Activated naive CD4-positive, alpha-beta T cell treated with anti-CD3 and anti-CD28 coated beads, Interleukin-2, amount 10 ng/mL, durations not matched to agents 7 days and 5 days (primary cell): ENCODE measurements at regions of chr12 and their contacts with region 1.

Region 1: GRCh38 chr12:123384318-123384993 is 524 bp downstream of the KMT5A start:
- DNase-seq: peak; percentile 54
- H3K4me3 Mint-ChIP-seq: peak overlapping the region; percentile 97
- H3K27ac Mint-ChIP-seq: peak overlapping the region; percentile 86
- H3K4me1 Mint-ChIP-seq: peaks cover 42% of the 10 kb centered on the region
- H3K27me3 Mint-ChIP-seq: no peaks in the 10 kb centered on the region

Region 2: GRCh38 chr12:123319826-123320225 is 64.6 kb before region 1 on chr12:
- CTCF ChIA-PET with region 1: no interaction called
- DNase-seq: no peak
- H3K4me3 Mint-ChIP-seq: no peak overlapping the region
- H3K27ac Mint-ChIP-seq: no peak overlapping the region
- H3K4me1 Mint-ChIP-seq: no peaks in the 10 kb centered on the region
- H3K27me3 Mint-ChIP-seq: no peaks in the 10 kb centered on the region

Region 3: GRCh38 chr12:123365025-123365917 is 19.2 kb before region 1 on chr12:
- CTCF ChIA-PET with region 1: interaction called, 14 read pairs
- DNase-seq: peak; percentile 98
- H3K4me3 Mint-ChIP-seq: peak overlapping the region; percentile 80
- H3K27ac Mint-ChIP-seq: peak overlapping the region; percentile 96
- H3K4me1 Mint-ChIP-seq: peaks cover 11% of the 10 kb centered on the region
- H3K27me3 Mint-ChIP-seq: no peaks in the 10 kb centered on the region

Region 4: GRCh38 chr12:123398550-123399254 is 14.2 kb after region 1 on chr12:
- CTCF ChIA-PET with region 1: no interaction called
- DNase-seq: no peak
- H3K4me3 Mint-ChIP-seq: no peak overlapping the region
- H3K27ac Mint-ChIP-seq: no peak overlapping the region
- H3K4me1 Mint-ChIP-seq: no peaks in the 10 kb centered on the region
- H3K27me3 Mint-ChIP-seq: no peaks in the 10 kb centered on the region

Region 5: GRCh38 chr12:123512838-123513665 is 128.6 kb after region 1 on chr12:
- CTCF ChIA-PET with region 1: no interaction called
- DNase-seq: no peak
- H3K4me3 Mint-ChIP-seq: no peak overlapping the region
- H3K27ac Mint-ChIP-seq: no peak overlapping the region
- H3K4me1 Mint-ChIP-seq: peaks cover 7% of the 10 kb centered on the region
- H3K27me3 Mint-ChIP-seq: no peaks in the 10 kb centered on the region